ENCODE measurements at regions of chr16 and their contacts with region 1.

Region 1: DNA sequence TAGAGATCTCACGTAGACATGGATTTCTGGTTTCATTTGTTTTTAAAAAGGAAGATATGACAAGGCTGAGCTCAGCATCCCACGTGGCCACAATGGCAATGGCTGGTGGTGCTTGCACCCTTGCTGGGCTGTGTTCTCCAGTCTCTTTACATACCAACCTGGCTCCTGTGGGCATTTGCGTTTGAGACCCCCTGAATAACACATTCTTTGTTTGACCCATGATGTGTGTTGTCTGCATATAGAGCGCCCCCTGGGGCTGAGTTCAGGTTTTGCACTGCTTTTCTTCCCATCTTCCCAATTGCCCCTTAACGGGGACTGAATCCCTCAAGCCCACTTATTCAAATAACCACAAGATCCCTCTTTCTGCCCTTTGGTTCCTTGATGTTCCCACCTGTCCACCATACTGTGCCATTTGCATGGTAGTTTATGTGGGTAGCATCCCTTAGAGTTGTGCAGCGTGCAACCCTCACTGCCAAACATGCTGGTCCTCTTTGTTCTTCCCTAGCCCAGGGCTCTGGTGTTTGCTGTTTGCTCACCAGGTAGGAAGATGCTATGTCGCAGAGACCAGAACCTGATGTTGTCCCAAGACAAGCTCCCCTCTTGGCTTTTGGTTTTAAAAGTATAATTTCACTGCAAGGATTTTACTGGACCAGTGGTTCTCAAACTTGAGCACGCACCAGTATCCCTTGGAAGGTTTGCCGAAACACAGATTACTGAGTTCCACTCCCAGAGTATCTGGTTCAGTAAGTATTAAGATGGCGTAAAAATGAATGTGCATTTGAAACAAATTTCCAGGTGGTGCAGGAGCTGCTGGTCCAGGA is 38.5 kb upstream of the NKD1 start:
- DNase-seq: peak; percentile 50
- ATAC-seq: no peak
- H3K4me3 ChIP-seq: peak overlapping the region in 2 of 3 experiments; percentile 19 to 21; a peak in 3 of 6 replicates
- H3K27ac ChIP-seq: no peak overlapping the region
- H3K4me1 ChIP-seq: peaks cover 92% of the 10 kb centered on the region
- H3K27me3 ChIP-seq: no peaks in the 10 kb centered on the region
- CTCF ChIP-seq: peak; percentile 76
- EP300 ChIP-seq: no peak
- POLR2A ChIP-seq: no peak
- RAD21 ChIP-seq: peak; percentile 83

Region 2: GRCh38 chr16:50397196-50397595 is 112.5 kb before region 1 on chr16:
- CTCF ChIA-PET with region 1: no interaction called
- POLR2A ChIA-PET with region 1: no interaction called
- in situ Hi-C with region 1: no loop called
- intact Hi-C with region 1: no loop called
- DNase-seq: no peak
- ATAC-seq: no peak
- H3K4me3 ChIP-seq: no peak overlapping the region
- H3K27ac ChIP-seq: no peak overlapping the region
- H3K4me1 ChIP-seq: 0 out of 2 replicates have a peak, but pooled peaks cover 2% of the 10 kb centered on the region
- H3K27me3 ChIP-seq: peaks cover 5 to 26% of the 10 kb centered on the region in 2 experiments; a peak in 4 of 5 replicates
- CTCF ChIP-seq: no peak
- EP300 ChIP-seq: no peak
- POLR2A ChIP-seq: no peak
- RAD21 ChIP-seq: no peak

Region 3: DNA sequence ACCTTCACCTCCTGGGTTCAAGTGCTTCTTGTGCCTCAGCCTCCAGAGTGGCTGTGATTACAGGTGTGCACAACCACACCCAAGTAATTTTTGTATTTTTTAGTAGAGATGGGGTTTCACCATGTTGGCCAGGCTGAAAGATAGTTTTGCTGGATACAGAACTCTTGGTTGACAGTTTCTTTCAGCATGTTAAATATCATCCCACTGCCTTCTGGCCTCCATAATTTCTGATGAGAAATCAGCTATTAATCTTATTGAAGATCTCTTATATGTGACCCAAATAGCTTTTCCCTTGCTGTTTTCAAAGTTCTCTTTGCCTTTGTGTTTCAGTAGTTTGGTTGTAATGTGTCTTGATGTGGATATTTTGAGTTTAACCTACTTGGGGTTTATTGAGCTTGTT is 90.6 kb before region 1 on chr16:
- CTCF ChIA-PET with region 1: no interaction called
- POLR2A ChIA-PET with region 1: no interaction called
- in situ Hi-C with region 1: no loop called
- intact Hi-C with region 1: no loop called
- DNase-seq: no peak
- ATAC-seq: no peak
- H3K4me3 ChIP-seq: no peak overlapping the region
- H3K27ac ChIP-seq: no peak overlapping the region
- H3K4me1 ChIP-seq: peaks cover 4% of the 10 kb centered on the region; the same call in 1 of the 2 replicates
- H3K27me3 ChIP-seq: peaks cover 0 to 5% of the 10 kb centered on the region in 2 experiments; a peak in 1 of 5 replicates
- CTCF ChIP-seq: no peak
- EP300 ChIP-seq: no peak
- POLR2A ChIP-seq: no peak
- RAD21 ChIP-seq: no peak

Region 4: DNA sequence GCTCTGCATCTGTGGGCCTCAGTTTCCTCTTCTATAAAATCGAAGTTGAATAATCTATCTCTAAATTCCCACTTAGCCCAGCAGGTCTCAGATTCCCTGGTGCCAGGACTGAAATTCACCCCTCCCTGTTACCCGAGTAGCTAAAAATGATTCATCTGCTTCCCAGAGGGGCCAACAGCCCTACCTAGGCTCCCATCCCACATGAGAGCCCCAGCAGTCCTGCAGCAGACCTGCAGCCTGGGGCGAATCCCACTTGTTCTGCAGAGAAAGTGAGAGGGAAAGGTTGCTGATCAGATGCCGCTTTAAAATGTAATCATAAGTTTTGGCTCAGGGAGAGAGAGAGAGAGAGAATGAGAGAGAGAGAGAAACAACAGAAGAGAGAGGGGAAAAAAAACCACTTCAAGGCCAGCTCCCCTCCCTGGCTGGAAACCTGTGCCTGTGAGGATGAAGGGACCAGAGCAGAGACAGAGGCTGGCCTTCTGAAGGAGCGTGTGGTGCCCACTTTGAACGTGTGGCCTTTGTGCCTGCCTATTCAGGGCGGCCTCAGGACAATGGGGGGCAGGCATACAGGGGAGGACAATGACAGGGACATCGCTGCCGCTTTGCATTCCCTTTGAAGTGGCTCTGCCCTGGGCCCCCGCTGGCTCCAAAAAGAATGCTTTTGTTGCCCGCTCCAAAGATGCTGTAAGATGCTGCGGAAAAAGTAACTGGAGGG is 46.8 kb before region 1 on chr16:
- CTCF ChIA-PET with region 1: no interaction called
- POLR2A ChIA-PET with region 1: interaction called, 62 read pairs
- in situ Hi-C with region 1: loop called (anchors 5 kb)
- intact Hi-C with region 1: loop called (anchors 5 kb)
- DNase-seq: peak; percentile 72
- ATAC-seq: no peak
- H3K4me3 ChIP-seq: peak overlapping the region in 1 of 3 experiments; percentile 18; a peak in 1 of 6 replicates
- H3K27ac ChIP-seq: peak overlapping the region; percentile 41
- H3K4me1 ChIP-seq: peaks cover 78% of the 10 kb centered on the region
- H3K27me3 ChIP-seq: no peaks in the 10 kb centered on the region
- CTCF ChIP-seq: no peak
- EP300 ChIP-seq: no peak
- POLR2A ChIP-seq: no peak
- RAD21 ChIP-seq: no peak

Region 5: DNA sequence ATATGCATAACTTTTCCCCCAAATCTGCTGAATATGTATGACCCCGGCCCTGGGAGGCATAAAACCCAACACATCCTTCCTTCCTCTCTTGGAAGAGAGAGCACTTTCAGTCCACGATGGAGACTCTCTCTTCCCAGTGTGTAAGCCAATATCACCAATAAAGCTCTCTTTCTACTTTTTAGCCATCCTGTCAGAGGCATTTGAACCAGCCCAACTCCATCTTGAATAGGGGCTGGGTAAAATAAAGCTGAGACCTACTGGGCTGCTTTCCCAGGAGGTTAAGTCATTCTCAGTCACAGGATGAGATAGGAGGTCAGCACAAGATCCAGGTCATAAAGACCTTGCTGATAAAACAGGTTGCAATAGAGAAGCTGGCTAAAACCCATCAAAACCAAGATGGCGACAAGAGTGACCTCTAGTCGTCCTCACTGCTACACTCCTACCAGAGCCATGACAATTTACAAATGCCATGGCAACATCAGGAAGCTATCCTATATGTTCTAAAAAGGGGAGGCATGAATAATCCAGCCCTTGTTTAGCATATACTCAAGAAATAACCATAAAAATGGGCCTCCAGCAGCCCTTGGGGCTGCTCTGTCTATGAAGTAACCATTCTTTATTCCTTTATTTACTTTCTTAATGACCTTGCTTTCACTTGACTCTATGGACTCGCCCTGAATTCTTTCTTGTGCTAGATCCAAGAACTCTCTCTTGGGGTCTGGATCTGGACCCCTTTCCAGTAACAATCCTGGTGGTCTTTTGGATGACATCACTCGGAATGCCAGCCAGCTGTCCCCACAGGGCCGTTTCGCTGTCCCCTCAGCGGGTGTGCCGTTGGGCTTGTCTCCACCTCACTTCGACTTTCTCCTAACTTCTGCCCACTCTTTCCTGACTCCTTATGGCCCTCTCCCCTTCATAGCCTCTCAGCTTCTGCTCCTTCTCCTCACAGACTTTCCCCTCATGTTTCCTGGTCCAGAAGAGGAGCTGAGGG is 14.9 kb before region 1 on chr16:
- CTCF ChIA-PET with region 1: no interaction called
- POLR2A ChIA-PET with region 1: interaction called, 14 read pairs
- in situ Hi-C with region 1: no loop called
- intact Hi-C with region 1: no loop called
- DNase-seq: no peak
- ATAC-seq: no peak
- H3K4me3 ChIP-seq: no peak overlapping the region
- H3K27ac ChIP-seq: no peak overlapping the region
- H3K4me1 ChIP-seq: peaks cover 49% of the 10 kb centered on the region
- H3K27me3 ChIP-seq: no peaks in the 10 kb centered on the region
- CTCF ChIP-seq: no peak
- EP300 ChIP-seq: no peak
- POLR2A ChIP-seq: no peak
- RAD21 ChIP-seq: no peak

Region 6: GRCh38 chr16:50530277-50531236 is 20.8 kb after region 1 on chr16:
- CTCF ChIA-PET with region 1: no interaction called
- POLR2A ChIA-PET with region 1: interaction called, 28 read pairs
- in situ Hi-C with region 1: no loop called
- intact Hi-C with region 1: no loop called
- DNase-seq: peak; percentile 97
- ATAC-seq: peak; percentile 86
- H3K4me3 ChIP-seq: no peak overlapping the region; a peak in 1 of 6 replicates
- H3K27ac ChIP-seq: peak overlapping the region; percentile 74
- H3K4me1 ChIP-seq: peaks cover 63% of the 10 kb centered on the region
- H3K27me3 ChIP-seq: no peaks in the 10 kb centered on the region
- CTCF ChIP-seq: peak; percentile 11
- EP300 ChIP-seq: peak in 1 of 2 experiments; percentile 94; a peak in 2 of 4 replicates
- POLR2A ChIP-seq: peak in 1 of 2 experiments; percentile 34; a peak in 1 of 4 replicates
- RAD21 ChIP-seq: no peak

Region 7: DNA sequence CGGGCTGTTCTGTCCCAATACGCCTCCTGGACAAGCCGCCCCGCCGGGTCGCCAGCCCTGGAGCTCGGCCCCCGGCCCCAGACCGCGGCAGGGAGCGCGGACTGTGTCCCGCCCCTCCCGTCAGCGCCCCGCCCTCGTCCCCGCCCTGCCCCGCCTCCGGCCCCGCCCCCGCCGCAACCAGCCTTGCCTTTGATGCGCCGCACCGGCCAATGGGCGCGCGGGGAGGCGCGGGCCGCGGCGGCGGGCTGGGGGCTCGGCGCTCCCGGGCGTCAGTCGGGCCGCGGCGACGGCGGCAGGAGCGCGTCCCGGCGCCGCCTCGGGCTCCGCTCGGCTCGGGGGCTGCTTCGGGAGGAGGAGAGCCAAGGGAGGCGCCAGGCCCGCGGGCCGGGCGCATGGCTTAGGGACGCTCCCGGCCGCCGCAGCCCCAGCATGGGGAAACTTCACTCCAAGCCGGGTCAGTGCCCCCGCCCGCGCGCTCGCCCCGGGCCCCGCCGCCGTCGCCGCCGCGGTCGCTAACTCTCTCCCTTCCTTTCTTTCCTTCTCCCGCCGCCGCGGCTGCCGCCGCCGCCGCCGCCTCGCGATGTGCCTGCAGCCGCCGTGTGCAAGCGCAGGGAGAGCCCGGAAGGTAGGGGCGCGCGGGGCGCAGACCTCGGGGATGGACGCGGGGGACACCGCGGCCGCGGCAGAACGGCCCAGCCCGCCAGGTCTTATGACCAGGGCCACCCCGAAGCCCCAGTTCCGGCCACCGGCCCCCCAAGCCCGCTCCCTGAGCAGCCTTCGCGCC is 38.6 kb after region 1 on chr16 and contains the start of gene NKD1:
- CTCF ChIA-PET with region 1: no interaction called
- POLR2A ChIA-PET with region 1: interaction called, 14 read pairs
- in situ Hi-C with region 1: no loop called
- intact Hi-C with region 1: loop called (anchors 5 kb)
- DNase-seq: peak; percentile 84
- ATAC-seq: peak; percentile 87
- H3K4me3 ChIP-seq: peak within 1 kb of the TSS; percentile 93 to 100 (median 98)
- H3K27ac ChIP-seq: peak within 1 kb of the TSS; percentile 88
- H3K4me1 ChIP-seq: peaks cover 62% of the 10 kb centered on the region
- H3K27me3 ChIP-seq: peaks cover 0 to 6% of the 10 kb centered on the region in 2 experiments; a peak in 1 of 5 replicates
- CTCF ChIP-seq: no peak
- EP300 ChIP-seq: peak in 1 of 2 experiments; percentile 4; a peak in 1 of 4 replicates
- POLR2A ChIP-seq: peak; percentile 93 to 95
- RAD21 ChIP-seq: peak; percentile 68
- total RNA-seq, gene NKD1: 59.0 and 70.4 TPM in 2 replicates

Region 8: GRCh38 chr16:50644729-50645128 is 135.0 kb after region 1 on chr16:
- CTCF ChIA-PET with region 1: no interaction called
- POLR2A ChIA-PET with region 1: no interaction called
- in situ Hi-C with region 1: no loop called
- intact Hi-C with region 1: no loop called
- DNase-seq: no peak
- ATAC-seq: peak; percentile 4; the same call in 2 of the 3 replicates
- H3K4me3 ChIP-seq: no peak overlapping the region
- H3K27ac ChIP-seq: no peak overlapping the region
- H3K4me1 ChIP-seq: peaks cover 15% of the 10 kb centered on the region
- H3K27me3 ChIP-seq: no peaks in the 10 kb centered on the region
- CTCF ChIP-seq: peak; percentile 59
- EP300 ChIP-seq: no peak
- POLR2A ChIP-seq: no peak
- RAD21 ChIP-seq: no peak